ENCODE measurements at regions of chr4 and their contacts with region 1.

Region 1: GRCh38 chr4:150591406-150591805 is 9.5 kb downstream of the MAB21L2 start:
- DNase-seq: peak in 1 of 2 experiments; percentile 54
- H3K4me3 ChIP-seq: peak overlapping the region in 3 of 4 experiments; percentile 15 to 45 (median 23); a peak in 5 of 8 replicates
- H3K27ac ChIP-seq: no peak overlapping the region
- H3K4me1 ChIP-seq: peaks cover 0 to 13% (median 5%) of the 10 kb centered on the region in 4 experiments; a peak in 4 of 7 replicates
- H3K27me3 ChIP-seq: no peaks in the 10 kb centered on the region
- CTCF ChIP-seq: peak in 2 of 3 experiments; percentile 3 to 4; a peak in 1 of 4 replicates
- EP300 ChIP-seq: no peak
- POLR2A ChIP-seq: no peak
- RAD21 ChIP-seq: peak; percentile 2 to 12; a peak in 1 of 4 replicates

Region 2: GRCh38 chr4:150579551-150580234 is 11.7 kb before region 1 on chr4:
- CTCF ChIA-PET with region 1: interaction called, 4 read pairs
- POLR2A ChIA-PET with region 1: interaction called, 11 read pairs
- DNase-seq: peak in 1 of 2 experiments; percentile 72
- H3K4me3 ChIP-seq: peak overlapping the region; percentile 46 to 69 (median 60)
- H3K27ac ChIP-seq: no peak overlapping the region
- H3K4me1 ChIP-seq: peaks cover 6 to 15% (median 8%) of the 10 kb centered on the region in 4 experiments; a peak in 5 of 7 replicates
- H3K27me3 ChIP-seq: peaks cover 2 to 48% (median 34%) of the 10 kb centered on the region in 4 experiments; a peak in 6 of 7 replicates
- CTCF ChIP-seq: no peak
- EP300 ChIP-seq: no peak
- POLR2A ChIP-seq: no peak
- RAD21 ChIP-seq: no peak; a peak in 1 of 4 replicates

Region 3: DNA sequence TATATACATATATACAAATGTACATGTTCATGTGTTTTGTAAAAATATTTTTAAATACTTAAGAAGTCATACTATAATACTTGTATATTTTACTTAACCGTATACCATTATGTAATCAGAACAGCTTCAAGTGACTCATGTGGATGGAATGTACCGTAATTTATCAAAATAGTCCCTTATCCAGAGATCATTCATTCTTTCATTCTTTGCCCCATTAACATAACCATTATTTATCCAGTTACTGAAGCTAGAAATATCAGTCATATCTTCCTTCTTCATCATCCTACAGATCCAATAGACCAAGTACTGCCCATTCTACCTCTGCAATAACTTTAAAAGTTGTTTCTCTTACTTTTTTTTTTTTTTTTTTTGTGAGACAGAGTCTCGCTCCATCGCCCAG is 154.8 kb after region 1 on chr4:
- CTCF ChIA-PET with region 1: no interaction called
- POLR2A ChIA-PET with region 1: no interaction called
- DNase-seq: no peak
- H3K4me3 ChIP-seq: no peak overlapping the region
- H3K27ac ChIP-seq: no peak overlapping the region
- H3K4me1 ChIP-seq: no peaks in the 10 kb centered on the region
- H3K27me3 ChIP-seq: peaks cover 0 to 1% (median 0%) of the 10 kb centered on the region in 4 experiments; a peak in 1 of 7 replicates
- CTCF ChIP-seq: no peak
- EP300 ChIP-seq: no peak
- POLR2A ChIP-seq: no peak
- RAD21 ChIP-seq: no peak

Region 4: DNA sequence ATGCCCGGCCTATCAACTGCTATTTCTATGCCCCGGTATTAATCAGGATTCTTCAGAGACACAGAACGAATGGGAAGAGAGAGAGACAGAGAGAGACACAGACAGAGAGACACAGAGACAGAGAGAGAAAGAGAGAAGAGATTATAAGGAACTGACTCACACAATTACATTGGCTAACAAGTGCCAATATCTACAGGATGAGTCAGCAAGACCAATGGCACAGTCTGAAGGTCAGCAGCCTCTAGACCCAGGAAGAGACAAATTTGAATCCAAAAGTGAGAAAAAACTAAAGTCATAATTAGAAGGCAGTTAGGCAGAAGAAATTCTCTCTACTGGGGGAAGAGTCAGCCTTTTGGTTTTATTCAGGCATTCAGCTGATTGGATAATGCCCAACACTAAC is 177.8 kb after region 1 on chr4:
- CTCF ChIA-PET with region 1: no interaction called
- POLR2A ChIA-PET with region 1: no interaction called
- DNase-seq: no peak
- H3K4me3 ChIP-seq: no peak overlapping the region
- H3K27ac ChIP-seq: no peak overlapping the region
- H3K4me1 ChIP-seq: no peaks in the 10 kb centered on the region
- H3K27me3 ChIP-seq: no peaks in the 10 kb centered on the region
- CTCF ChIP-seq: no peak
- EP300 ChIP-seq: no peak
- POLR2A ChIP-seq: no peak
- RAD21 ChIP-seq: no peak